ENCODE measurements at regions of chr12 and their contacts with region 1.

Region 1: DNA sequence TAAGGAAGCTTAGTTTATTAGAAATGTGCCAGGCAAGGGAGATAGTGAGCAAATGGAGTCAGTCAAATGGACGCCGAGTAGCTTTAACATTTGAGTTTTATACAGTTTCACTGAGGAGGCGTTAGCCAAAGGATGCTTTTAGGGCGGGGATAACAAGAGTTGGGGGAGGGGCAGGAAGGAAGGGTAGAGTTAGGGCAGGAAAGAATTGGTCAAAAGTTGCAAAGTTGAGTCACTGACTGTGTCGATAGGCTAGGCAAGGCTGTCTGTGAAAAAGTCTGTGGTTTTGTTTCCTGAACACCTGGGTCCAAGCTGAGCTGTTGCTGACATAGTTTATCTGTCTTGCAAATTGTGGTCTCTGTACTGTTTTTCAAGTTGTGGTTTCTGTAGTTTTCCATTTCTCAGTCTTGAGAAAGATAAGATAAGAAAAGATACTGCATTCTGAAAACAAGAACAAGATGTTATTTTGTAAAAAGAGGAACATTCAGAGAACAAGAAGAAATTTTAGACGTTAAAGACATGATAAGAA is 62.6 kb upstream of the RESF1 start:
- DNase-seq: peak; percentile 70 to 98 (median 85)
- ATAC-seq: peak; percentile 93
- H3K4me3 ChIP-seq: no peak overlapping the region
- H3K4me3 Mint-ChIP-seq: peak overlapping the region; percentile 56
- H3K27ac ChIP-seq: peak overlapping the region; percentile 64 to 79
- H3K27ac Mint-ChIP-seq: peak overlapping the region; percentile 96
- H3K4me1 ChIP-seq: peaks cover 70% of the 10 kb centered on the region
- H3K4me1 Mint-ChIP-seq: peaks cover 52% of the 10 kb centered on the region
- H3K27me3 ChIP-seq: no peaks in the 10 kb centered on the region
- H3K27me3 Mint-ChIP-seq: no peaks in the 10 kb centered on the region
- CTCF ChIP-seq: no peak

Region 2: DNA sequence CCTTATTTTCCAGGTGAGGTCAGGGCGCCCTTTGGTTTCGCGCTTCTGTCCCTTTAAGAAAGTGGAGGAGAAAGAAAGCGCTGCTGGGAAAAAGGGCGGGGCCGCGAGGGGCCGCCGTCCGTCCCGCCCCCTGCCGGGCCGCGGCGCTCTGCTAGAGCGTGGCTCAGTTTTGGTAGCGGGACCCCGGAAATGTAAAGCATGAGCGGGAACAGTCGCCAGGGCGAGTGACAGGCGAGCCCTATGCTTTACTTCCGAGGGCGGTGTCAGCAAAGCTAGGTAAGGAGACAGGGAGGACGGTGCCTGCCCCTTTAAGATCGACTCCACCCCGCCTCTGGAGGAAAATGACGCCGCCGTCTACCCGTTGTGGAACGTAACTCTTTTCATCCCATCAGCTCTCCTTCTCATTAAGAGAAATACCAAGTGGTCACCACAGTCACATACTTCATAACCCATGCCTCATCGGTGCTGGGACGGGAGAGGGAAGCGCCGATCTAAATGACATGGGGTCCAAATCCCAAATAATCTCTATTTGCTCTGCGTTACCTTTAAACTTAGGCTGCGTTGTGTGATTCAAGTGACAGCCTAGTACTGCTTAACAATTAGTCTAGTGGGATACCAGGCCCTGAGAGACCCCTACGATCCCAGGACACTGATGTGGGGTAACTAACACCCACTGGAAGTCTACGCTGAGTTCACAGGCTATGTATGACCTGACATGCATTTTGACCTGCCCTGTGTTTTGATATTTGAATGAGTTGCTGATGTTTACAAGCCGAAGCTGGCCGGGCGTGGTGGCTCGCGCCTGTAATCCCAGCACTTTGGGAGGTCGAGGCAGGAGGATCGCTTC is 237.3 kb before region 1 on chr12 and contains the start of gene ETFBKMT:
- CTCF ChIA-PET with region 1: interaction called, 5 read pairs
- POLR2A ChIA-PET with region 1: interaction called, 8 read pairs
- intact Hi-C with region 1: loop called in 1 of 2 experiments (anchors 5 kb)
- DNase-seq: peak; percentile 84 to 97 (median 92)
- ATAC-seq: peak; percentile 99
- H3K4me3 ChIP-seq: peak within 1 kb of the TSS; percentile 82 to 87
- H3K4me3 Mint-ChIP-seq: peak within 1 kb of the TSS; percentile 98
- H3K27ac ChIP-seq: peak within 1 kb of the TSS; percentile 89 to 92
- H3K27ac Mint-ChIP-seq: peak within 1 kb of the TSS; percentile 100
- H3K4me1 ChIP-seq: peaks cover 11% of the 10 kb centered on the region
- H3K4me1 Mint-ChIP-seq: peaks cover 14% of the 10 kb centered on the region
- H3K27me3 ChIP-seq: no peaks in the 10 kb centered on the region
- H3K27me3 Mint-ChIP-seq: no peaks in the 10 kb centered on the region
- CTCF ChIP-seq: peak; percentile 22
- total RNA-seq, gene ETFBKMT: 0.41 to 1.0 TPM

Region 3: GRCh38 chr12:31804185-31804504 is 92.4 kb before region 1 on chr12:
- CTCF ChIA-PET with region 1: no interaction called
- POLR2A ChIA-PET with region 1: interaction called, 5 read pairs
- intact Hi-C with region 1: loop called in 1 of 2 experiments (anchors 2 kb)
- DNase-seq: peak in 1 of 9 experiments; percentile 16
- ATAC-seq: no peak
- H3K4me3 ChIP-seq: peak overlapping the region; percentile 33 to 56
- H3K4me3 Mint-ChIP-seq: peak overlapping the region; percentile 94
- H3K27ac ChIP-seq: peak overlapping the region; percentile 34 to 68
- H3K27ac Mint-ChIP-seq: peak overlapping the region; percentile 97
- H3K4me1 ChIP-seq: peaks cover 33% of the 10 kb centered on the region
- H3K4me1 Mint-ChIP-seq: peaks cover 55% of the 10 kb centered on the region
- H3K27me3 ChIP-seq: no peaks in the 10 kb centered on the region
- H3K27me3 Mint-ChIP-seq: no peaks in the 10 kb centered on the region
- CTCF ChIP-seq: no peak

Region 4: DNA sequence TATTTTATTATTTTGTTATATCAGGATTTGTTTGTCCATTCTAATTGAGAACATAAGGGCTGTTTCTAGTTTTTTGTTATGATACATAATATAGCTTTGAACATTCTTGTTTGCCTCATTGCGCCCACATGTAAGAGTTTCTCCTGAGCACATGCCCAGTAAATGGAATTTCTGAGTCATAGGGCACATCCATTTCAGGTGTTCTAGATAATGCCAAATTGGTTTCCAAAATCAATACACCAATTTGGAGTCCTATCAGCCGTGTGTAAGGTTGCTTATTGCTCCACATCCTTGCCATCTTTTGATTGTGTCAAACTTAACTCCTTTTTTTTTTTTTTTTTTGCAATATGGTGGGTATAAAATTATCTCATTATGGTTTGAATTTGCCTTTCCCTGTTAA is 35.2 kb before region 1 on chr12:
- CTCF ChIA-PET with region 1: no interaction called
- POLR2A ChIA-PET with region 1: no interaction called
- intact Hi-C with region 1: loop called in 1 of 2 experiments (anchors 5 kb)
- DNase-seq: no peak
- ATAC-seq: no peak
- H3K4me3 ChIP-seq: no peak overlapping the region
- H3K4me3 Mint-ChIP-seq: no peak overlapping the region
- H3K27ac ChIP-seq: no peak overlapping the region
- H3K27ac Mint-ChIP-seq: no peak overlapping the region
- H3K4me1 ChIP-seq: no peaks in the 10 kb centered on the region
- H3K4me1 Mint-ChIP-seq: peaks cover 12% of the 10 kb centered on the region
- H3K27me3 ChIP-seq: no peaks in the 10 kb centered on the region
- H3K27me3 Mint-ChIP-seq: no peaks in the 10 kb centered on the region
- CTCF ChIP-seq: no peak

Region 5: DNA sequence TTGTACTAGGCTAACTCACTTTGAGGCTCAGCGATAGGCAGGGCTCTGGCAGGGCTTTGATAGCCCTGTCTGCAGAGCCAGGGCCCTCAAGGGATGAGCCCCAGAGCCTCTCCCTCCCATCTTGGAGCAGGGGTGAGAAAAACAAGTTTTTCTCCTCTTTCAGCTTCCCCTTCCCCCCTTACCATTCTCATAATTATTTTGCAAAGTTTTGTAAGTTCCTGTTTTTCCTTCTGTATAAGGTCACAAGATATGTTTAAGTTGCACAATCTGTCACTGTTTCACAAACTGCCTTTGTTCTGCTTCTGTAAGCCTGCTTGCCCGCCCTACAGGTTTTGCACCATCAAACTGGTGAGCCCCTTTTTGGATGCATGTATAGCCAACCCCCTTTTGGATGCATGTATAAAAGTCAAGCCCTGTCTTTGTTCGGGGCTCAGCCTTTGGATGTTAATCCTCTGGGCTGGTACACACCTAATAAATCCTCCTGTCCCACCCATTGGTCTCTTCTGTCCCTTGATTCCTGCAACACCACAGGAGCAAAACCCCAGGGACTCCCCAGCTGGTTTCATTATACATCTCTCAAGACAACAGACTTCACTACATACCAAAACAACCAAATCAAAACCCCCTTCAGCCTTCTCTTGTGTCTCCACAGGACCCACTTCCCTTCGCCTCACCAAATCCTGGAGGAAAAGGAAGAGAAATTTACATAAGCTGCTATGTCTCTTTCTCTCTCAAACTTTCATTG is 10.2 kb after region 1 on chr12:
- CTCF ChIA-PET with region 1: no interaction called
- POLR2A ChIA-PET with region 1: no interaction called
- intact Hi-C with region 1: no loop called
- DNase-seq: no peak
- ATAC-seq: no peak
- H3K4me3 ChIP-seq: no peak overlapping the region
- H3K4me3 Mint-ChIP-seq: no peak overlapping the region
- H3K27ac ChIP-seq: no peak overlapping the region
- H3K27ac Mint-ChIP-seq: peak overlapping the region; percentile 64
- H3K4me1 ChIP-seq: no peaks in the 10 kb centered on the region
- H3K4me1 Mint-ChIP-seq: peaks cover 11% of the 10 kb centered on the region
- H3K27me3 ChIP-seq: no peaks in the 10 kb centered on the region
- H3K27me3 Mint-ChIP-seq: no peaks in the 10 kb centered on the region
- CTCF ChIP-seq: no peak

Region 6: DNA sequence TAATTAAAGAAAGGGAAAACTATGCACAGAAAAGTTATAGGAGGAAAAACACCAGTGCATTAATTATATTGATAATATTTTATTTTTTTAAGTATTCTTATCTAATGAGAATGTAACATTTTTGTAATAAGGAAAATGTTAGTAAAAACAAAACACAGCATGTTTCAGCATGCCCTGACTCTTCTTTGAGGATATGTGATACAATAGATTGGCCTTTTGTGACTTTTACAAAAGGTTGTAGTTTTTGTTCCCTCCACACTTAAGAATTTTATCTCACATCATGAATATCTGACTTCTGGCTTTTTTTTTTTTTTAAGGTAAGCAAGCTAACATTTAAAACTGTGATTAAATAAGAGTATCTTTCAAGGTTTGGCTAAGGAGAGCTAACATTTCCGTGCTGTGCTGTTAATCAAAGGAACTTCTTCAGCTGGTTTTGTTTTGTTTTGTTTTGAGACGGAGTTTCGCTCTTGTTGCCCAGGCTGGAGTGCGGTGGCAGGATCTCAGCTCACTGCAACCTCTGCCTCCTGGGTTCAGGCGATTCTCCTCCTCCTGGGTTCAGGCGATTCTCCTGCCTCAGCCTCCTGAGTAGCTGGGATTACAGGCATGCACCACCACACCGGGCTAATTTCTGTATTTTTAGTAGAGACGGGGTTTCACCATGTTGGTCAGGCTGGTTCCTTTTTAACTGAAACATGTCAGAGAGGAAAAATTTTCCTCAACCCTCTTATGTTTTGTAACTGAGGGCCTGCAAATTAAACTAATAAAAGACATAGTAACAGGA is 31.9 kb after region 1 on chr12:
- CTCF ChIA-PET with region 1: interaction called, 4 read pairs
- POLR2A ChIA-PET with region 1: interaction called, 10 read pairs
- intact Hi-C with region 1: loop called in 1 of 2 experiments (anchors 1 kb)
- DNase-seq: peak in 6 of 9 experiments; percentile 4 to 68 (median 31)
- ATAC-seq: peak; percentile 64
- H3K4me3 ChIP-seq: peak overlapping the region; percentile 23 to 26
- H3K4me3 Mint-ChIP-seq: peak overlapping the region; percentile 88
- H3K27ac ChIP-seq: peak overlapping the region; percentile 44 to 64
- H3K27ac Mint-ChIP-seq: peak overlapping the region; percentile 99
- H3K4me1 ChIP-seq: peaks cover 47% of the 10 kb centered on the region
- H3K4me1 Mint-ChIP-seq: peaks cover 55% of the 10 kb centered on the region
- H3K27me3 ChIP-seq: no peaks in the 10 kb centered on the region
- H3K27me3 Mint-ChIP-seq: no peaks in the 10 kb centered on the region
- CTCF ChIP-seq: no peak

Measured in CD8-positive, alpha-beta T cell (primary cell).